Kidney (tissue), 22 donors: ENCODE measurements at regions of chr6 and their contacts with region 1.

Region 1: DNA sequence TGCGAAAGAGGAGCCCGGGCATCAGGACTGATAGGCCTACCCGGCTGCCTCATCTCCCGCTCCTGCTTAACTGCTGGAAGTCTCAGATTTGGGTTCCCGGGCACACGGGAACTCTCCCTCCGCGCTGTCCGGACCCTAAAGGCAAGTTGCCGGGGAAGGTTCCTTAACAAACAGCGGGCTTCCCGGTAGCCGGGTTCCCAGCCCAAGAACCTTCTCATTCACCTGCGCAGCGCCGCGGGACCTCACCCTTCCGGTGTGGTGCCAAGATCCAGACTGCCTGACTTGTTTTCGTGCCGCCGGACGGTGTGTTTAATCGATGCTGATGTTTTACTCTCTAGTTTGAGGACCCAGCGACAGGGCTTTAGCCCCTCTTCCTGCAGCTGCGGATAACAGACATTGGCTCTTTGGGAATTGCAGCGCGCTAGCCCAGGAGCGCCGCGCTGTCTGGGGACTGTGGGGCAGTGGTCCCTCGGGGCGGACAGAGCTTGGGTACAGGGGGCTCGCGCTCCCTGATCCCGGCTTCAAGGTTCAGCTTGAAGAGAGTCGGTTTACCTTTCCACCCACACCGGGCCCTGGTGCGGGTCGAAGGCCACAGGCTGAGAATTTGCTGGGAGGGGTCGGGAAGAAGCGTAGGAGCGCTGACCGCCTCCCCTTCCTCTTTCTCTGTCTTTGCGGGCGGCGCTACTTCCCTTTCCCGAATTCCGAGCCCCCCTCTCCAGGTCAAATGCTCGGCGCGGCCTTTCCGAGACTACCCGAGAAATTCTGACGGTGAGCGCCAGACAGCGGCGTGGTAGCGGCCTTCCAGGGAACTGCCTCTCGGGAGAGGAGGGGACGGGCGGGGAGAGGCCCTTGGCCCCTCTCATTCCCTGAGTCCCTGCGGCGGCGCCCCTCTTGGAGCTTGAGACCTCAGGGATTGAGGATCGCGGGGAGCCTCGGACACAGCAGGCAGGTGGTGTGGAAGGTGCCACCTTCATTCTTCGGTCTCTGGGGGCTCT is 17.2 kb downstream of the ABT1 start:
- DNase-seq: peak in 4 of 5 donors; percentile 38 to 80 (median 49)
- H3K4me3 ChIP-seq: peak overlapping the region; percentile 7 to 41 (median 12)
- H3K27ac ChIP-seq: no peak overlapping the region
- H3K4me1 ChIP-seq: peaks cover 0 to 6% (median 0%) of the 10 kb centered on the region in 3 donors
- H3K27me3 ChIP-seq: peaks cover 8% of the 10 kb centered on the region
- CTCF ChIP-seq: no peak

Region 2: GRCh38 chr6:27081931-27082330 is 467.9 kb after region 1 on chr6:
- intact Hi-C with region 1: loop called (anchors 10 kb)
- DNase-seq: no peak
- H3K4me3 ChIP-seq: no peak overlapping the region
- H3K27ac ChIP-seq: no peak overlapping the region
- H3K4me1 ChIP-seq: peaks cover 0 to 2% (median 0%) of the 10 kb centered on the region in 3 donors
- H3K27me3 ChIP-seq: peaks cover 2% of the 10 kb centered on the region
- CTCF ChIP-seq: no peak